WTC11 (cell line): ENCODE measurements at regions of chr14 and their contacts with region 1.

Region 1: GRCh38 chr14:77151918-77152588 is 10.5 kb upstream of the ZDHHC22 start:
- DNase-seq: no peak
- ATAC-seq: no peak
- H3K4me3 Mint-ChIP-seq: no peak overlapping the region
- H3K27ac Mint-ChIP-seq: no peak overlapping the region
- H3K4me1 Mint-ChIP-seq: peaks cover 34% of the 10 kb centered on the region
- H3K27me3 Mint-ChIP-seq: no peaks in the 10 kb centered on the region
- CTCF ChIP-seq: no peak

Region 2: GRCh38 chr14:76514613-76515012 is 637.4 kb before region 1 on chr14:
- CTCF ChIA-PET with region 1: no interaction called
- POLR2A ChIA-PET with region 1: no interaction called
- DNase-seq: no peak
- ATAC-seq: no peak
- H3K4me3 Mint-ChIP-seq: no peak overlapping the region
- H3K27ac Mint-ChIP-seq: no peak overlapping the region
- H3K4me1 Mint-ChIP-seq: peaks cover 10% of the 10 kb centered on the region
- H3K27me3 Mint-ChIP-seq: no peaks in the 10 kb centered on the region; the same call in 1 of the 2 replicates
- CTCF ChIP-seq: no peak

Region 3: DNA sequence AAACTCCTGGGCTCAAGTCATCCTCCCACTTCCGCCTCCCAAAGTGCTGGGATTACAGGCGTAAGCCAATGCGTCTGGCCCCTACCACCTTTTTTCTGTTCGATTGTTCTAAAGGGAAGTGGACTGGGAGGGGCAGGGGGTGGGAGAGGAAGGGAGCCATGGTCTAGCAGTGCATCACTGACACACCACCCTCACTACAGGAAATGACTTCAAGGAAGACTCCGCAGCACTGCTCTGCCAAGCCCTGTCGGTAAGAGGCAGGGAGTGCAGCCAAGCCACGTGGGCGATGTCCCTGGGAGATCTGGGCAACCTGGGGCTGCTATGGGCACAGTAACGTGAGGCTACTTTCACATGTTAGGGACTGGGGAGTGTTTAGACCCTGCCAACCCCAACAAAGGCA is 307.8 kb before region 1 on chr14:
- CTCF ChIA-PET with region 1: no interaction called
- POLR2A ChIA-PET with region 1: no interaction called
- DNase-seq: no peak
- ATAC-seq: peak; percentile 97
- H3K4me3 Mint-ChIP-seq: no peak overlapping the region
- H3K27ac Mint-ChIP-seq: no peak overlapping the region
- H3K4me1 Mint-ChIP-seq: no peaks in the 10 kb centered on the region
- H3K27me3 Mint-ChIP-seq: no peaks in the 10 kb centered on the region
- CTCF ChIP-seq: no peak

Region 4: GRCh38 chr14:77133720-77134338 is 18.2 kb before region 1 on chr14:
- CTCF ChIA-PET with region 1: interaction called, 147 read pairs
- POLR2A ChIA-PET with region 1: no interaction called
- DNase-seq: peak; percentile 83
- ATAC-seq: peak; percentile 91
- H3K4me3 Mint-ChIP-seq: no peak overlapping the region
- H3K27ac Mint-ChIP-seq: peak overlapping the region; percentile 36
- H3K4me1 Mint-ChIP-seq: peaks cover 3% of the 10 kb centered on the region
- H3K27me3 Mint-ChIP-seq: no peaks in the 10 kb centered on the region
- CTCF ChIP-seq: no peak

Region 5: GRCh38 chr14:77181603-77182437 is 29.8 kb after region 1 on chr14 and contains the start of gene TMEM63C:
- CTCF ChIA-PET with region 1: interaction called, 39 read pairs
- POLR2A ChIA-PET with region 1: no interaction called
- DNase-seq: peak; percentile 98
- ATAC-seq: peak; percentile 97
- H3K4me3 Mint-ChIP-seq: peak within 1 kb of the TSS; percentile 74
- H3K27ac Mint-ChIP-seq: peak within 1 kb of the TSS; percentile 89
- H3K4me1 Mint-ChIP-seq: peaks cover 9% of the 10 kb centered on the region
- H3K27me3 Mint-ChIP-seq: peaks cover 9% of the 10 kb centered on the region
- CTCF ChIP-seq: no peak
- total RNA-seq, gene TMEM63C: 3.6 to 8.8 TPM (median 6.0 TPM) in 3 replicates

Region 6: GRCh38 chr14:77212943-77213678 is 61.1 kb after region 1 on chr14:
- CTCF ChIA-PET with region 1: interaction called, 78 read pairs
- POLR2A ChIA-PET with region 1: no interaction called
- DNase-seq: peak; percentile 87
- ATAC-seq: peak; percentile 98
- H3K4me3 Mint-ChIP-seq: no peak overlapping the region
- H3K27ac Mint-ChIP-seq: no peak overlapping the region
- H3K4me1 Mint-ChIP-seq: peaks cover 17% of the 10 kb centered on the region
- H3K27me3 Mint-ChIP-seq: peaks cover 3% of the 10 kb centered on the region; the same call in 1 of the 2 replicates
- CTCF ChIP-seq: peak; percentile 60; the same call in 1 of the 2 replicates

Region 7: DNA sequence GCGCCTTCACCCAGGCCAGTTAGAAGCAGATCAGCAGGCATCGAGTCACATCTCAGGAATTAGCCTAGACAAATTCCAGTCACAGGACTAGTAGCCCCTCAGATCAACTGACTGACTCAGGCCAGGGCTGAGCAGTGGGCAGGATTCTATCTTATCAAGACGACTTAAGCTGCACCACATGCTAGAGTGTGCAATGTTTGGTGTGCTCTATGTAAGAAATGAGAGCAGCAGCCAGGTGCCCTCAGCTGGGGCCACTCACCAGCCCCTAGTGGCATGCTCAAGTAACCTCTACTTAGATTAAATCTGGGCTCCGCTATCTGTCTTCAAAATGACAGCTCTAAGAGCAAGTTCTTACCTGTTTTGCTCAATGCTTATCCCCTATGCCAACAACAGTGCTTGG is 138.7 kb after region 1 on chr14:
- CTCF ChIA-PET with region 1: interaction called, 11 read pairs
- POLR2A ChIA-PET with region 1: no interaction called
- DNase-seq: no peak
- ATAC-seq: peak; percentile 60
- H3K4me3 Mint-ChIP-seq: no peak overlapping the region
- H3K27ac Mint-ChIP-seq: no peak overlapping the region
- H3K4me1 Mint-ChIP-seq: peaks cover 8% of the 10 kb centered on the region
- H3K27me3 Mint-ChIP-seq: no peaks in the 10 kb centered on the region
- CTCF ChIP-seq: no peak

Region 8: DNA sequence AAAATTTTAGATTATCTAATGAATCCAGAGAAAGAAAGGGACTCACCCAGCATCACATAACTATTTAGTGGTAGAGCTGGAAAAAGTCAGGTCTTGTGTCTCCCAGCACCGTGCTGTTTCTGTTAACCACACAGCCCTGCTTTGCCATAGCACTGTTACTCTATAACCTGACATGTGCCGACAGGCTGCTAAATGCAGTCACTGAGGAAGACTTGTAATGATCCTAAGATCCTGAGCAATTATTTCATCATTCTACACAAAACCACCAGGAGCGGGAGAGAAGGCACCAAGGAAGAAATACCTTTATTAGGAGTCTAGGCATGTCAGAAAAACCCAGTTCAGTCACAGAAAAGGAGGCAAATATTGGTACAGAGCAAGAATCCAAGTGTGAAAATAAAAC is 274.3 kb after region 1 on chr14:
- CTCF ChIA-PET with region 1: no interaction called
- POLR2A ChIA-PET with region 1: no interaction called
- DNase-seq: no peak
- ATAC-seq: no peak
- H3K4me3 Mint-ChIP-seq: no peak overlapping the region
- H3K27ac Mint-ChIP-seq: no peak overlapping the region
- H3K4me1 Mint-ChIP-seq: peaks cover 13% of the 10 kb centered on the region
- H3K27me3 Mint-ChIP-seq: no peaks in the 10 kb centered on the region
- CTCF ChIP-seq: no peak